ENCODE measurements at regions of chrX and their contacts with region 1.

Region 1: GRCh38 chrX:154541724-154542467 is 4.8 kb downstream of the G6PD start:
- DNase-seq: peak; percentile 94
- ATAC-seq: peak; percentile 59
- H3K4me3 ChIP-seq: peak overlapping the region; percentile 54 to 78 (median 72); a peak in 5 of 6 replicates
- H3K27ac ChIP-seq: peak overlapping the region; percentile 100
- H3K4me1 ChIP-seq: peaks cover 66% of the 10 kb centered on the region
- H3K27me3 ChIP-seq: no peaks in the 10 kb centered on the region; a peak in 1 of 5 replicates
- CTCF ChIP-seq: no peak
- EP300 ChIP-seq: peak in 1 of 2 experiments; percentile 93; a peak in 2 of 4 replicates
- POLR2A ChIP-seq: no peak; a peak in 2 of 4 replicates
- RAD21 ChIP-seq: no peak

Region 2: DNA sequence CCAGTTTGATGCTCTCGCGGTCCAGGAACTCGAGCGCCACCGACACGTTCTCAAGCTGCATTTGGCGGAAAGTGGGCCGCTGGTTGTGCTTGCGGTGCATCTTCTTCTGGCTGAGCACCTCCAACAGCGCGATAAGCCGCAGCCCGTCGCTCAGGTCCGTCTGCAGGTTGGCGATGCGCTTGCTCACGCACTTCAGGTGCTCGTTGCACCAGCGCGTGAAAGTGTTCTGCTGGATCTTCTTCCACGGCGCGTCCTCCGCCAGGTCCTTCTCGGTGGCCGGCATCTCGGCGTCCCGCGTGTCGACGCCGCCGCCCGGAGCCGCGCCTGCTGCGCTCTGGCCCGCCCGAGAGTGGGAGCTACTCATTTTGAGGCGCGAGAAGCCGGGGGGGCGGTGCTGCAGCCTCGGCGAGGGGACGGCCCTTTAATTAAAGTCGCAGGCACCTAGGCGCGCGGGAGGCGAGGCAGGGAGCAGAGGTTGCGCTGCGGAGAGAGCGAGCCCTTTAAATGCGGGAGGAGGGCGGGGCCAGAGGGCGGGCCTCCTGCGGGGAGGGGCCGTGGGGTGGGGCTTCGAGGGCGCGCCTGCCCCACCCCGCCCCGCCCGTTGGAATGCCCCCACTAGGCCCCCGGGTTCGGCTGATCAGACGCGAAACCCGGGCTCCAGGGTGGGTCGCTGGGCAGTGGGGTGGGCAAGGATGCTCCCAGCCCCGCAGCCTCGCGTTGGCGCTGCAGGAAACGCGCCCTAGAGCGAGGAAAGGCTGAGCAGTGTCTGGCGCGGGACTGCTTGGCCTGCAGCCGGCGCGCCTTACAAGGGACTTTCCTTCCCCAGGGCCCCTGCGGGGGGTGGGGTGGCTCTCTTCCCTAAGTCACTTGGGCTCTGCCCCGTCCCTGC is 170.8 kb before region 1 on chrX:
- CTCF ChIA-PET with region 1: interaction called, 55 read pairs
- POLR2A ChIA-PET with region 1: interaction called, 17 read pairs
- in situ Hi-C with region 1: no loop called
- intact Hi-C with region 1: no loop called
- DNase-seq: peak; percentile 85
- ATAC-seq: peak; percentile 57
- H3K4me3 ChIP-seq: peak overlapping the region; percentile 65 to 92 (median 80)
- H3K27ac ChIP-seq: peak overlapping the region; percentile 58
- H3K4me1 ChIP-seq: peaks cover 37% of the 10 kb centered on the region
- H3K27me3 ChIP-seq: no peaks in the 10 kb centered on the region
- CTCF ChIP-seq: peak; percentile 25; the same call in 1 of the 2 replicates
- EP300 ChIP-seq: no peak
- POLR2A ChIP-seq: peak in 1 of 2 experiments; percentile 89; a peak in 2 of 4 replicates
- RAD21 ChIP-seq: no peak

Region 3: GRCh38 chrX:154490414-154491083 is 51.3 kb before region 1 on chrX and contains the start of gene SLC10A3:
- CTCF ChIA-PET with region 1: no interaction called
- POLR2A ChIA-PET with region 1: interaction called, 20 read pairs
- in situ Hi-C with region 1: no loop called
- intact Hi-C with region 1: no loop called
- DNase-seq: peak; percentile 87
- ATAC-seq: peak; percentile 92
- H3K4me3 ChIP-seq: peak within 1 kb of the TSS; percentile 68 to 78 (median 72)
- H3K27ac ChIP-seq: peak within 1 kb of the TSS; percentile 73
- H3K4me1 ChIP-seq: peaks cover 12% of the 10 kb centered on the region
- H3K27me3 ChIP-seq: no peaks in the 10 kb centered on the region
- CTCF ChIP-seq: peak; percentile 59
- EP300 ChIP-seq: no peak
- POLR2A ChIP-seq: peak in 1 of 2 experiments; percentile 70; a peak in 2 of 4 replicates
- RAD21 ChIP-seq: no peak
- total RNA-seq, gene SLC10A3: 10.1 and 10.8 TPM in 2 replicates

Region 4: GRCh38 chrX:154526901-154527675 is 14.8 kb before region 1 on chrX:
- CTCF ChIA-PET with region 1: no interaction called
- POLR2A ChIA-PET with region 1: interaction called, 38 read pairs
- in situ Hi-C with region 1: no loop called
- intact Hi-C with region 1: no loop called
- DNase-seq: peak; percentile 56
- ATAC-seq: peak; percentile 78
- H3K4me3 ChIP-seq: peak overlapping the region; percentile 37 to 63 (median 40); a peak in 5 of 6 replicates
- H3K27ac ChIP-seq: peak overlapping the region; percentile 63
- H3K4me1 ChIP-seq: peaks cover 62% of the 10 kb centered on the region
- H3K27me3 ChIP-seq: no peaks in the 10 kb centered on the region
- CTCF ChIP-seq: peak; percentile 68
- EP300 ChIP-seq: no peak
- POLR2A ChIP-seq: no peak
- RAD21 ChIP-seq: no peak

Measured in HepG2 (cell line).